HepG2 (cell line): ENCODE measurements at regions of chr2 and their contacts with region 1.

Region 1: GRCh38 chr2:10990561-10991111 is 78.9 kb downstream of the KCNF1 start:
- DNase-seq: no peak
- ATAC-seq: no peak
- H3K4me3 ChIP-seq: no peak overlapping the region
- H3K27ac ChIP-seq: no peak overlapping the region
- H3K4me1 ChIP-seq: no peaks in the 10 kb centered on the region
- H3K27me3 ChIP-seq: peaks cover 9 to 61% of the 10 kb centered on the region in 2 experiments; a peak in 4 of 5 replicates
- CTCF ChIP-seq: no peak
- EP300 ChIP-seq: no peak
- POLR2A ChIP-seq: no peak
- RAD21 ChIP-seq: no peak

Region 2: DNA sequence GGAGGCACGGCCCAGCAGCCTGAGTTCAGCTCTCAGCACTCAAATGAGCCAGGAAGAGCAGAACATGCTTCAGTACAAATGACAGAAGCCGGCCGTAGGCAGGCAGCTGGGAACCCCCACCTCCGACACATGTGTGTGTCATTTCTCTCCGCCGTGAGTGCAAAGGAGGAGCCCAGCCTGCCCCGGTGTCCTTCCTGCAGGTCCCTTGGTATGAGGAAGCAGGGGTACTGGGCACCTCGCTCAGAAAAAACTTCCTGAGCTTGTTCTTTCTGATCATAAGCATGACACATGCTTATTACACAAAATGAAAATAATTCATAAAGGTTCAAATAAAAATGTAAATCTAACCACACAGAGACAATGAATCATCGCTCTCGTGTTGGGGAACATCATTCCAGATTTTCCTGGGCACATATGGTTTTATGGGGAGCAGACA is 43.6 kb before region 1 on chr2:
- CTCF ChIA-PET with region 1: no interaction called
- POLR2A ChIA-PET with region 1: no interaction called
- in situ Hi-C with region 1: no loop called
- intact Hi-C with region 1: loop called (anchors 1 kb)
- DNase-seq: no peak
- ATAC-seq: no peak
- H3K4me3 ChIP-seq: no peak overlapping the region
- H3K27ac ChIP-seq: no peak overlapping the region
- H3K4me1 ChIP-seq: no peaks in the 10 kb centered on the region
- H3K27me3 ChIP-seq: peaks cover 8 to 61% of the 10 kb centered on the region in 2 experiments; a peak in 4 of 5 replicates
- CTCF ChIP-seq: no peak
- EP300 ChIP-seq: no peak
- POLR2A ChIP-seq: no peak
- RAD21 ChIP-seq: no peak

Region 3: GRCh38 chr2:11012131-11012693 is 21.6 kb after region 1 on chr2:
- CTCF ChIA-PET with region 1: no interaction called
- POLR2A ChIA-PET with region 1: no interaction called
- in situ Hi-C with region 1: no loop called
- intact Hi-C with region 1: loop called (anchors 1 kb)
- DNase-seq: no peak
- ATAC-seq: no peak
- H3K4me3 ChIP-seq: no peak overlapping the region
- H3K27ac ChIP-seq: no peak overlapping the region
- H3K4me1 ChIP-seq: no peaks in the 10 kb centered on the region
- H3K27me3 ChIP-seq: peaks cover 0 to 43% of the 10 kb centered on the region in 2 experiments; a peak in 3 of 5 replicates
- CTCF ChIP-seq: no peak
- EP300 ChIP-seq: no peak
- POLR2A ChIP-seq: no peak
- RAD21 ChIP-seq: no peak